Naive thymus-derived CD4-positive, alpha-beta T cell (primary cell): ENCODE measurements at regions of chr16 and their contacts with region 1.

Region 1: DNA sequence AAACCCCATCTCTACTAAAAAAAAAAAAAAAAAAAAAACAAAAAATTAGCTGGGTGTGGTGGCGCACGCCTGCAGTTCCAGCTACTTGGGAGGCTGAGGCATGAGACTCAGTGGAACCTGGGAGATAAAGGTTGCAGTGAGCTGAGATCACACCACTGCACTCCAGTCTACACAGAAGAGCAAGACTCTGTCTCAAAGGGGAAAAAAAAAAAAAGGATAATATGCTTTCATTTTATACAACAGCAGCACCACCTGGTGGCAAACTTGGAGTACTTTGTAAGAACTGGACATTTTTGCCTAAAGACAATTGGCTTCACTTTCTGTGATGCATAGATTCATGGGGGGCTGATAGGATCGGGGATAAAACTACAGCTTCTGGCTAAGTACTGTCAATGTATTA is 8.5 kb downstream of the CHTF8 start:
- DNase-seq: peak in 8 of 9 donors; percentile 30 to 77 (median 68)
- ATAC-seq: peak; percentile 89
- H3K4me3 ChIP-seq: no peak overlapping the region
- H3K4me3 Mint-ChIP-seq: no peak overlapping the region
- H3K27ac ChIP-seq: no peak overlapping the region
- H3K27ac Mint-ChIP-seq: peak overlapping the region in 3 of 9 donors; percentile 22 to 60 (median 28)
- H3K4me1 ChIP-seq: peaks cover 0 to 4% of the 10 kb centered on the region in 2 donors
- H3K4me1 Mint-ChIP-seq: peaks cover 10 to 33% (median 23%) of the 10 kb centered on the region in 7 donors
- H3K27me3 ChIP-seq: no peaks in the 10 kb centered on the region
- H3K27me3 Mint-ChIP-seq: no peaks in the 10 kb centered on the region

Region 2: GRCh38 chr16:68590201-68590994 is 533.5 kb before region 1 on chr16:
- CTCF ChIA-PET with region 1: interaction called, 3 read pairs
- POLR2A ChIA-PET with region 1: no interaction called
- intact Hi-C with region 1: loop called in 1 of 2 experiments (anchors 5 kb)
- DNase-seq: peak; percentile 14 to 59 (median 52)
- ATAC-seq: peak; percentile 83
- H3K4me3 ChIP-seq: no peak overlapping the region
- H3K4me3 Mint-ChIP-seq: peak overlapping the region in 4 of 10 donors; percentile 12 to 60 (median 28)
- H3K27ac ChIP-seq: no peak overlapping the region
- H3K27ac Mint-ChIP-seq: peak overlapping the region in 2 of 9 donors; percentile 83 to 89
- H3K4me1 ChIP-seq: no peaks in the 10 kb centered on the region
- H3K4me1 Mint-ChIP-seq: peaks cover 2 to 9% (median 4%) of the 10 kb centered on the region in 7 donors
- H3K27me3 ChIP-seq: no peaks in the 10 kb centered on the region
- H3K27me3 Mint-ChIP-seq: peaks cover 0 to 8% (median 0%) of the 10 kb centered on the region in 5 donors

Region 3: DNA sequence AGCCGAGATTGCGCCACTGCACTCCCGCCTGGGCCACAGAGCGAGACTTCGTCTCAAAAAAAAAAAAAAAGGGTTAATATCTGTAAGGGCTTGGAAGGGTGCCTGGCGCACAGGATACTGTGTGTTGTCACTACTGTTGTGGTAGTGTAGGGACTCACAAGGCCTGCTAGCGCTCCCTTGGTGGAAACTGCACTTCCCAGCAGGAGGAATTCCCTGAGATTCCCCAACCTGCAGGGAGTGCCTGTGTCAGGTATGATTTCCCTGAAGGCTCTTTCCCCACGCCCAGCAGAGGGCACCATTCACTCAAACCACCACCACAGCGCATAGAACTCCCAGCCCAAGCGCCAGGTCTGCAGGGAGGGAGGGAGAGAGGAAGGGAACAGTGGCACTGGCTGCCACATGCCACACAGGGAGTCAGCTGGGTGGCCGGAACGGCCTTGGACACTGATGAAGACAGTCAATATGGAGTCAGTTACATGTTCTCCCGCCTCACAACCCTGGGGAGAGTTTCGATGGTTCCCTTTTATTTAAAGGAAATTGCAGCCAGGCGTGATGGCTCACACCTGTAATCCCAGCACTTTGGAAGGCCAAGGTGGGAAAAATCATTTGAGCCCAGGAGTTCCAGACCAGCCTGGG is 419.6 kb before region 1 on chr16:
- CTCF ChIA-PET with region 1: no interaction called
- POLR2A ChIA-PET with region 1: no interaction called
- intact Hi-C with region 1: loop called in 1 of 2 experiments (anchors 5 kb)
- DNase-seq: peak in 8 of 9 donors; percentile 9 to 66 (median 31)
- ATAC-seq: peak; percentile 72
- H3K4me3 ChIP-seq: no peak overlapping the region
- H3K4me3 Mint-ChIP-seq: no peak overlapping the region
- H3K27ac ChIP-seq: no peak overlapping the region
- H3K27ac Mint-ChIP-seq: no peak overlapping the region
- H3K4me1 ChIP-seq: no peaks in the 10 kb centered on the region
- H3K4me1 Mint-ChIP-seq: peaks cover 0 to 4% (median 0%) of the 10 kb centered on the region in 7 donors
- H3K27me3 ChIP-seq: no peaks in the 10 kb centered on the region
- H3K27me3 Mint-ChIP-seq: no peaks in the 10 kb centered on the region

Region 4: DNA sequence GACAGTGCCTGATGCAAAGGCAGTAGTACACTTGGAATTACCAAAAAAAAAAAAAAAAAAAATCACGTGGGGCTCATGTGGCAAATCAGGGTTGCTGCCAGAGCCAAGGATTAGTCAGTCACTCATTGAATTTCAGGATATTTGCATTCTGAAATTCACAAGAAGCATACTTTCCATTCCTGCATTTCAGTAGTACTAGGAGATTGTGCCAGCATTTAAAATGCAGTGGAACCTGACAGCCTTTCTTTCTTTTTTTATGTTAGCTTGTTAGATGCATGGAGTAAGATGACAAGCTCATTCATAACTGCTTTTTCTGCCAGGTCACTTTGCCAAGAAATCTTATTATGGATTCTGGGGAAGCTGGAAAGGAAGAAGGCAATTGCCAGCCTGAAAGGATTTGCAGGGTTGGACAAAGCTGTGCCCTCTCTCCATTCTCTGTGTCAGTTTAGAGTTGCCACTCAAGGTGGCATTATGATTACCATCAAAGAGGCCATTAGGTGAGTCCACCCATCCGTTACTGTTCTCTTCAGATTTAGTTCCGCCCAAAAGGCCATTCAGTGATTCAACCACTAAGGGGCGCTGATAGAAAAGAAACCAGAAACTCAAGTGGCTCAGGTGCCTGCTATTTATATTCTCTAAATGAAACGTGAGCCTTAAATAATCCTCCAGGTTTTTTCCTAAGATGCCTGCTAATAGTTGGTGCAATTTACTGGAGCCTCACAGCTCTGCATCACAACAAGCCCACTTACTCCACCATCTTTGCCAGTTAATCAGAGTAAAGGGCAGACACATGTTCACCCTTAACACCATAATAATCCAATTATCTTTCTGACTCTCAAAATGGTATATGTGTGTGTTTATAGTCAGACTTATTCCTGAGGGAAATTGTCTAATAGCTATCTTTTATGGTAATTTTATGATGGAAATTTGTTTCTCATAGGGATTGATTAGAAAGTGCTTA is 221.6 kb before region 1 on chr16:
- CTCF ChIA-PET with region 1: no interaction called
- POLR2A ChIA-PET with region 1: no interaction called
- intact Hi-C with region 1: loop called in 1 of 2 experiments (anchors 1 kb)
- DNase-seq: no peak
- ATAC-seq: no peak
- H3K4me3 ChIP-seq: no peak overlapping the region
- H3K4me3 Mint-ChIP-seq: no peak overlapping the region
- H3K27ac ChIP-seq: no peak overlapping the region
- H3K27ac Mint-ChIP-seq: no peak overlapping the region
- H3K4me1 ChIP-seq: no peaks in the 10 kb centered on the region
- H3K4me1 Mint-ChIP-seq: no peaks in the 10 kb centered on the region
- H3K27me3 ChIP-seq: no peaks in the 10 kb centered on the region
- H3K27me3 Mint-ChIP-seq: no peaks in the 10 kb centered on the region

Region 5: DNA sequence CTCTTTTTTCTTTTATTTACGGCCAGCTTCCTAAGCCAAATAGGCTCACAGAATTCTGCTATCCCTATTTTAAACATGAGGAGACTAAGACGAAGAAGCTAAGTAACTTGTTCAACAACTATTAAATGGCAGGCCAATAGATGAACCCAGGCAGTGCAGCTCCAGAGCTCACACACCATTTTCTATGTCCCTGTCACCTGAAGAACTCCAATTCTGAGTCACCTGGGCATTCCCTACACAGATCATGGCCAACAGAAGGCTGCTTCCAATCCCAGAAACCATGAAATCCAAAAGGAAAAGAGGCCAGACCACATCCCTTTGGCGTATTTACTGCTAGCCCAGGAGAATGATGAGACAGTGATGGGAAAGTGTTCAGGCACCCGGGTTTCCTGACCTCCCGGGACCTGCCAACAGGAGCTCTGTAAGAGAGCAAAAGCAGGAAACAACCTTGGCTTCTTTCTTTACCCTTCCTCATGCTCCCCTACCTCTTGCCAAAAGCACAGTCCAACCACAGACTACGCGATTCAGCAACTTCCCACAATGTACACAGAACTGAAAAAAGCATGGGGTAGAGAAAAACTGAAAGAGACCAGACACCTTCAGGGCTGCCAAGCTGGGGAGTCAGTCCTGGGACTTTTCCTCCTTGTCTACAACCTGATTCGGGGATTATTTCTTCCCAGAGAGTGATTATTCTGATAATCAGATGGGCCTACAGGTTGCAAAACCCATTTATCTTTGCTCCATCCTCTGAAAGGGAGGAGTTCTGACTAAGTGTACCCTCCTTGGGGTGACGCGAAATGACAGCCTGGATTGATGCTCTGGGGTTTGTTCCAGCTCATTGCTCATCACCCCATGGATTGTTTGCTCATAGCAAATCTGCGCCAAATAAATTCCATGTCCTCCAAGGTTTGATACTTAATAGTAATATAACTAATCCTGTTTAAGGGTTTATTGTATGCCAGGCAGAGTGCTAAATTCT is 66.2 kb before region 1 on chr16:
- CTCF ChIA-PET with region 1: no interaction called
- POLR2A ChIA-PET with region 1: no interaction called
- intact Hi-C with region 1: no loop called
- DNase-seq: no peak
- ATAC-seq: no peak
- H3K4me3 ChIP-seq: no peak overlapping the region
- H3K4me3 Mint-ChIP-seq: no peak overlapping the region
- H3K27ac ChIP-seq: no peak overlapping the region
- H3K27ac Mint-ChIP-seq: peak overlapping the region in 3 of 9 donors; percentile 7 to 48 (median 40)
- H3K4me1 ChIP-seq: no peaks in the 10 kb centered on the region
- H3K4me1 Mint-ChIP-seq: peaks cover 0 to 7% (median 0%) of the 10 kb centered on the region in 7 donors
- H3K27me3 ChIP-seq: no peaks in the 10 kb centered on the region
- H3K27me3 Mint-ChIP-seq: no peaks in the 10 kb centered on the region

Region 6: DNA sequence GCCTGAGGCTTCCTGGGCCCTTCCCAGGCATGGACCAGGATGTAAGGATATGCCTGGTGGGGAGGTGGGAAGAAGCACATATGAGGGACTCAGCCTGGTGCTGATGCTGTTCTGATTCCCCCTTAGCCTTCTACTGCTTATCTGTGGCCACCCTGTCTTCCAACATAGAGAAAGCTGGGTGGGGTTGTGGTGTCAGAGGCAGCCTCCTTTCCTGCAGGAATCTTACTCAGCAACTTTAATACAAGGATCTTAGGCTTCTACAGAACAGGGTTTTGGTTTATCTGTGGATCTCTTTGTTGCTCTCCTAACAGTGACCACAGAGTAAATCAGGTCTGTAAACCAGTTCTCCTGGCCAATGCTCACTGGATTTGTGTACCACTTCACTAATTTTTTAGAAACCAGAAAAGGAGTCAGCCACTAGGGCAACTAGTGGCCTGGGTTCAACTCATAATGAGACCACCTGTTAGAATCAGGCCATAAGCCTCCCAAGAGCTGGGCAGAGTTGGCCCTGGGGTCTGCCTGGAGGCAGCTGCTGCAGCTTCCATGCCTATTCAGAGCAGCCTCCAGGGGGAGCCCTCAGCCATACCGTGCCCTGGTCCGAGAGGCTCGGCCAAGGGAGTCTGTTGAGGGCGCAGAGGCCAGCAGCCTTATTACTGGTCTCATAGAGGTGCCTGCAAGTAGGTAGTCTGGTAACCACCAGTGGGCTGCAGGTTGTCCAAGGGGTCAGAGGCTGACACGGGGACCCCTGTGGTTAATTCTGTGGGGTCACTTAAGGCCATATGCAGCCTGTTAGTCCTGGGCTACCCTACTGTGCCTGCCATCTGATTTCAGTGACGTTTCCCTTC is 11.4 kb before region 1 on chr16:
- CTCF ChIA-PET with region 1: interaction called, 10 read pairs
- POLR2A ChIA-PET with region 1: no interaction called
- intact Hi-C with region 1: no loop called
- DNase-seq: peak in 4 of 9 donors; percentile 10 to 60 (median 32)
- ATAC-seq: peak; percentile 77
- H3K4me3 ChIP-seq: no peak overlapping the region
- H3K4me3 Mint-ChIP-seq: no peak overlapping the region
- H3K27ac ChIP-seq: no peak overlapping the region
- H3K27ac Mint-ChIP-seq: no peak overlapping the region
- H3K4me1 ChIP-seq: peaks cover 0 to 13% of the 10 kb centered on the region in 2 donors
- H3K4me1 Mint-ChIP-seq: peaks cover 2 to 20% (median 9%) of the 10 kb centered on the region in 7 donors
- H3K27me3 ChIP-seq: peaks cover 0 to 8% of the 10 kb centered on the region in 2 donors
- H3K27me3 Mint-ChIP-seq: peaks cover 12 to 21% (median 13%) of the 10 kb centered on the region in 5 donors